ENCODE measurements at regions of chr10 and their contacts with region 1.

Region 1: GRCh38 chr10:6580279-6581029 is 378 bp upstream of the PRKCQ start:
- DNase-seq: peak; percentile 87
- ATAC-seq: peak; percentile 56
- H3K4me3 Mint-ChIP-seq: peak overlapping the region; percentile 98
- H3K27ac Mint-ChIP-seq: peak overlapping the region; percentile 98
- H3K4me1 Mint-ChIP-seq: peaks cover 41% of the 10 kb centered on the region
- H3K27me3 Mint-ChIP-seq: no peaks in the 10 kb centered on the region
- CTCF ChIP-seq: peak; percentile 40

Region 2: DNA sequence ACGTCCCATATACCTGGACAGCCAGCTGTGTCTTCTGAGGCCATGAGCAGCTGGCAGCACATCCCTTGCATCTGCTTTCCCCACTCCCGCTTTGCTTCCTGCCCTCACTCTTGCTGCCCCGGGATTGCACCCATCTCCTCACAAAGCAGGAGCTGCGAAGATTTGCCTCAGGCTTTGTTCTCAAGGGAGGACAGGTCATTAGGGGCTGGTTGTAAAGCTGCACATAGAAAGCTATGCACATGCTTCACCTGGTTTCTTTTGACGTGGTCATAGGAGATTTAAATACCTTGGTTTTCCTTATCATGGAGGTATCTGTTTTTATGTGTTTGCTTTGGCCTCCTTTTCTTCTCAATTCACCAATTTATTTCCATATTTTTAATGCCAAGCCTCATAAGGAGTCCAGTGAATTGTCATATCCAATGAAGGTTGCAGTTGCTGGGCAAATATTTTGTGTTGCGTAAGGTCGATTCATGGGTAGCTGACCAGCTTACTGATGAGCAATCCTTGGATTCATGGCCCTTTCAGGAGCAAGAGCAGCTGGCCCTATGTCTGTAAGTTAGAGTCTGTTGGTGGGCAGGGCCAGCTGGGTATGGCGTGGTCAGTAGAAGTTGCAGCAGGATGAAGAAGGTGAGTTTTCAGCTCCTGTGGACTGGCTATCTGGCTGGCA is 194.9 kb before region 1 on chr10:
- CTCF ChIA-PET with region 1: no interaction called
- POLR2A ChIA-PET with region 1: no interaction called
- intact Hi-C with region 1: no loop called
- DNase-seq: no peak
- ATAC-seq: no peak
- H3K4me3 Mint-ChIP-seq: no peak overlapping the region
- H3K27ac Mint-ChIP-seq: no peak overlapping the region
- H3K4me1 Mint-ChIP-seq: peaks cover 41% of the 10 kb centered on the region
- H3K27me3 Mint-ChIP-seq: no peaks in the 10 kb centered on the region
- CTCF ChIP-seq: no peak

Region 3: GRCh38 chr10:6395606-6396005 is 184.8 kb before region 1 on chr10:
- CTCF ChIA-PET with region 1: no interaction called
- POLR2A ChIA-PET with region 1: no interaction called
- intact Hi-C with region 1: no loop called
- DNase-seq: no peak
- ATAC-seq: no peak
- H3K4me3 Mint-ChIP-seq: no peak overlapping the region
- H3K27ac Mint-ChIP-seq: no peak overlapping the region
- H3K4me1 Mint-ChIP-seq: peaks cover 11% of the 10 kb centered on the region
- H3K27me3 Mint-ChIP-seq: no peaks in the 10 kb centered on the region
- CTCF ChIP-seq: no peak

Region 4: GRCh38 chr10:6445501-6446316 is 134.7 kb before region 1 on chr10:
- CTCF ChIA-PET with region 1: interaction called, 16 read pairs
- POLR2A ChIA-PET with region 1: interaction called, 3 read pairs
- intact Hi-C with region 1: no loop called
- DNase-seq: peak; percentile 80
- ATAC-seq: peak; percentile 68
- H3K4me3 Mint-ChIP-seq: no peak overlapping the region
- H3K27ac Mint-ChIP-seq: peak overlapping the region; percentile 16
- H3K4me1 Mint-ChIP-seq: peaks cover 37% of the 10 kb centered on the region
- H3K27me3 Mint-ChIP-seq: no peaks in the 10 kb centered on the region
- CTCF ChIP-seq: peak; percentile 81

Region 5: DNA sequence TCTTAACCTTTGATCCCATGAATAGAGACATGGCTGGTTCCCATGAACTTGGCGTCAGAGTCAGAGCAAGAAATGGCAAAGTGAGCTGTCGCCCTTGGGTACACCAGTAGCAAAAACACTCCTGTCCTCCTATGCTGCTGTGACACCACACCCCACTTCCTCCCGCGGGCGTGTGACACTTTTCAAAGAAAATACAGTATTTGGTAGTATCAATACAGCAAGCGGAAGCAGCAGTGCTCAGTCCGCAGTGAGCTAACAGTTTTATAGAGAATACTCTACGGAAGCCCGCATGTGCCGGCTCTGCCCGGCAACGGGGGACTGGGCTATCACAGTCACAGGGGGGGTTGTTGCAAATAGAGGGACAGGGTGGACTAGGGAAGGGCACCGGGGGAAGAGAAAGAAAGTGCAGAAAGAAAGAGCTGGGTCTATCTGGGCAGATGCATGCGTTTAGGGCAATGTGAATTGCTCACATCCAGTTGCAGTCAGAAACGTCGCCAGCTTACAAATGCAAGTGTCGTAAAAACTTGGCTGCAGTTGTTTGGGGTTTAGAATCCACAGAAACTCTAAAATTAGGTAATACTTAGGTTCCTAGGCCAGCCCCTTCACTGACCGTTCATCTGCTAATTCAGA is 50.1 kb before region 1 on chr10:
- CTCF ChIA-PET with region 1: interaction called, 6 read pairs
- POLR2A ChIA-PET with region 1: interaction called, 11 read pairs
- intact Hi-C with region 1: no loop called
- DNase-seq: peak; percentile 94
- ATAC-seq: peak; percentile 93
- H3K4me3 Mint-ChIP-seq: peak overlapping the region; percentile 75
- H3K27ac Mint-ChIP-seq: peak overlapping the region; percentile 95
- H3K4me1 Mint-ChIP-seq: peaks cover 77% of the 10 kb centered on the region
- H3K27me3 Mint-ChIP-seq: no peaks in the 10 kb centered on the region
- CTCF ChIP-seq: no peak

Region 6: GRCh38 chr10:6593241-6593671 is 12.8 kb after region 1 on chr10:
- CTCF ChIA-PET with region 1: interaction called, 27 read pairs
- POLR2A ChIA-PET with region 1: interaction called, 85 read pairs
- intact Hi-C with region 1: loop called (anchors 1 kb)
- DNase-seq: no peak
- ATAC-seq: peak; percentile 50
- H3K4me3 Mint-ChIP-seq: peak overlapping the region; percentile 25
- H3K27ac Mint-ChIP-seq: peak overlapping the region; percentile 97
- H3K4me1 Mint-ChIP-seq: peaks cover 90% of the 10 kb centered on the region
- H3K27me3 Mint-ChIP-seq: no peaks in the 10 kb centered on the region
- CTCF ChIP-seq: no peak

Region 7: DNA sequence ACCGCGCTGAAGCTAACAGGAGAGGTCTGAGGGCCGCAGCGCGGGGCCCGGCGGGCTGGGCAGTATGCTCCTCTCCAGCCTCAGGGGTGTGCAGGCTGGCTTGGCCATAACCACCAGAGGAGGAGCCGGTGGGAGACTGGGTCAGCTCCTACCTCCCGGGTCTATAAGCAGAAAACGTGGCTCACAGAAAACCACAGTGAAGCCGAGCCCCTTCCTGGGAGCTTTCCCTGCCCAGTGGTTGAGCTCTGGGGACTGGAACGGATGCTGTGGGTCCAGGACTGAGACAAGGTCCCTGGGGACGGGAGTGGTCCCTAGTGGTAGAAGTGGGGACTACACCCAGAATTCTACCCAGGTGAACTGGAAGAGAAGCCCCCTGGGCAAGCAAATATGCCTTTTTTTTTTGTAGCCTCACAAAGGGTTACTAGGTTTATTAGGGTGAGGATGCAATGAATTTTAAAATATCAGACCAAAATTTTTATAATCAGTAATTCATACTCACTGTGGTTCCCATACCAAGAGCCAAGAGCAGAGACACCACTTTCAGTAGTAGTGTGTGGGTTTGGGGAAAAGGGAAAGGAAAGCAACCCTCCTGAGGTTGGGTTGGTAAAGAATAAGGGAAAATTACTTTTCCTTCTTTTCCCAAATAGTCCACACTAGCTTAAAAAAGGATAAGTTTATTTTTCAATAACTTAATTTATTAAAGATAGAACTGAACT is 67.5 kb after region 1 on chr10:
- CTCF ChIA-PET with region 1: interaction called, 32 read pairs
- POLR2A ChIA-PET with region 1: interaction called, 18 read pairs
- intact Hi-C with region 1: loop called (anchors 5 kb)
- DNase-seq: peak; percentile 85
- ATAC-seq: peak; percentile 91
- H3K4me3 Mint-ChIP-seq: peak overlapping the region; percentile 7
- H3K27ac Mint-ChIP-seq: no peak overlapping the region
- H3K4me1 Mint-ChIP-seq: peaks cover 50% of the 10 kb centered on the region
- H3K27me3 Mint-ChIP-seq: no peaks in the 10 kb centered on the region
- CTCF ChIP-seq: peak; percentile 98

Region 8: DNA sequence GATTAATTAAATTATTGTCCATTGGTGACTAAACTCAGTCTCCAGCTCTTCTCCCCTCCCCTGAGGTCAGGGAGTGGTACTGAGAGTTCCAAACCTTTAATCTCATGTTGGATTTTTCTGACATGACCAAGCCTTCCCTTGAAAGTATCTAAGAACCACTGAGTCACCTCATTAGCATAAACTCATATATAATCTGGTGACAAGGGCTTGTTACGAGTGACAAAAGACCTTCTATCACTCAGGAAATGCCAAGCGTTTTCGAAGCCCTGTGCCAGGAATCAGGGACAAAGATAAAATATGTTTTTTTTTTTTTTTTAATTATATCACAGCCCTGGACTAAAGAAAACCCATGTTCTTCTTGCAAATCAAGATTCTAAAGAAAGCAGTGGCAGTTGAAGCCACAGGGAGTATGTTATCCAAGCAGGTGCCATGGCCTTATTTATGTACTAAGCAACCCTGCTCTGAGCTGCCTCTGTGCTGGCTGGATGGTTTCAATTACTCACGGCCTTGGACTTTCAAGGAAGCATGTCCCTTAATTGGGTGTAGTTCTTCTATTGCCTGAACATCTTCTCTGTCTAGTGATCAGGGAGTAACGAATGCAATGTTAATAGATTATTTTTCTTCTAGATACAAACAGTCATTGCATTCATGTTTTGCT is 168.7 kb after region 1 on chr10:
- CTCF ChIA-PET with region 1: no interaction called
- POLR2A ChIA-PET with region 1: no interaction called
- intact Hi-C with region 1: no loop called
- DNase-seq: no peak
- ATAC-seq: no peak
- H3K4me3 Mint-ChIP-seq: no peak overlapping the region
- H3K27ac Mint-ChIP-seq: no peak overlapping the region
- H3K4me1 Mint-ChIP-seq: no peaks in the 10 kb centered on the region
- H3K27me3 Mint-ChIP-seq: peaks cover 9% of the 10 kb centered on the region
- CTCF ChIP-seq: no peak

Region 9: GRCh38 chr10:6958254-6958653 is 377.8 kb after region 1 on chr10:
- CTCF ChIA-PET with region 1: no interaction called
- POLR2A ChIA-PET with region 1: no interaction called
- intact Hi-C with region 1: no loop called
- DNase-seq: no peak
- ATAC-seq: no peak
- H3K4me3 Mint-ChIP-seq: no peak overlapping the region
- H3K27ac Mint-ChIP-seq: peak overlapping the region; percentile 9
- H3K4me1 Mint-ChIP-seq: peaks cover 18% of the 10 kb centered on the region
- H3K27me3 Mint-ChIP-seq: no peaks in the 10 kb centered on the region
- CTCF ChIP-seq: no peak

Measured in activated CD8-positive, alpha-beta T cell treated with anti-CD3 and anti-CD28 coated beads for 36 hours (primary cell).